ENCODE measurements at regions of chr4 and their contacts with region 1.

Region 1: GRCh38 chr4:37891260-37892159 is 626 bp downstream of the TBC1D1 start:
- DNase-seq: peak in 1 of 2 donors; percentile 55
- ATAC-seq: peak; percentile 12
- H3K4me3 ChIP-seq: peak overlapping the region; percentile 77 to 93
- H3K27ac ChIP-seq: peak overlapping the region; percentile 77 to 91
- H3K4me1 ChIP-seq: peaks cover 5% of the 10 kb centered on the region in 2 donors
- H3K27me3 ChIP-seq: no peaks in the 10 kb centered on the region

Region 2: GRCh38 chr4:37826295-37827029 is 65.0 kb before region 1 on chr4 and contains the start of gene PGM2:
- intact Hi-C with region 1: loop called (anchors 2 to 5 kb)
- DNase-seq: peak; percentile 93 to 96
- ATAC-seq: peak; percentile 98
- H3K4me3 ChIP-seq: peak within 1 kb of the TSS; percentile 33 to 79
- H3K27ac ChIP-seq: peak within 1 kb of the TSS in 1 of 2 donors; percentile 45
- H3K4me1 ChIP-seq: peaks cover 0 to 2% of the 10 kb centered on the region in 2 donors
- H3K27me3 ChIP-seq: no peaks in the 10 kb centered on the region
- total RNA-seq, gene PGM2: 23.7 to 24.6 TPM

Region 3: DNA sequence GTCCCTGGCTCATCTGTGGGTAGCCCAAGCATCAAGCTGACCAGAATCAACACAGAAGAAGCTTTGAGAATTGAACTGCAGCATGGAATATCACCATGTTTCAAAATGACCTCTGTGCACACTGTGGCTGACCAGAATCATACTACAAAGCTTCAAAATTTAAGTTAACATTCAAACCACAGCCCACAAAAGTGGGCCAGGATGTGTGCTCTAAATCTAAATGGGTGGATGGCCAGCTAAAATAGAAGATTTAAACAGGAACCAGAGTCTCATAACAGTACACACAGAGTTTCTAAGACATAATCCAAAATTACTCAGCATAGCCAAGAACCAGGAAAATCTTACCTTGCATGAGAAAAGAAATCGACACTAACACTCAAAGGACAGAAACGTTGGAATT is 818.5 kb after region 1 on chr4:
- intact Hi-C with region 1: no loop called
- DNase-seq: no peak
- ATAC-seq: no peak
- H3K4me3 ChIP-seq: no peak overlapping the region
- H3K27ac ChIP-seq: no peak overlapping the region
- H3K4me1 ChIP-seq: no peaks in the 10 kb centered on the region
- H3K27me3 ChIP-seq: no peaks in the 10 kb centered on the region

Measured in aorta (tissue), 5 donors.